ENCODE measurements at regions of chr9 and their contacts with region 1.

Region 1: GRCh38 chr9:1443450-1443849 is 393.3 kb downstream of the DMRT2 start:
- DNase-seq: no peak
- H3K4me3 ChIP-seq: no peak overlapping the region
- H3K4me3 Mint-ChIP-seq: no peak overlapping the region
- H3K27ac ChIP-seq: no peak overlapping the region
- H3K27ac Mint-ChIP-seq: no peak overlapping the region
- H3K4me1 ChIP-seq: no peaks in the 10 kb centered on the region
- H3K4me1 Mint-ChIP-seq: no peaks in the 10 kb centered on the region
- H3K27me3 ChIP-seq: no peaks in the 10 kb centered on the region
- H3K27me3 Mint-ChIP-seq: peaks cover 0 to 4% (median 3%) of the 10 kb centered on the region in 3 donors
- CTCF ChIP-seq: no peak

Region 2: DNA sequence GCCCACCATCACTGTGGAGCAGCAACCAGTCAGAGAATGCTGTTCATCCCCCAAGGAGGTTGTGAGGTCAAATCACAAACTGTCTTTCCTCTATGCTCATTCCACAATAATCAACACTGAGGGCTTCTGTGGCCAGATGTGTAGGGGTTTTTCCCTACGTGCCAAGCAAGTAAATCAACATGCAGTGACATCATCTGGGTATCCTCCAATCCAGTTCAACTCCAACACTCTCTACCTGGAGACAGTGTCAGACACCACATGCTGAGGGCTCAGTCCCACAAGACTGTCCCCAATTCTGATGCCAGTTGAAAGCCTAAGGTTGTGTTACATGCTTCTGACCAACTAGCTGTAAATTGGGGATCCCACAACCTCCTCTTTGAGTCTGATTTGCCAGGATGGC is 659.2 kb before region 1 on chr9:
- intact Hi-C with region 1: no loop called
- DNase-seq: no peak
- H3K4me3 ChIP-seq: no peak overlapping the region
- H3K4me3 Mint-ChIP-seq: no peak overlapping the region
- H3K27ac ChIP-seq: no peak overlapping the region
- H3K27ac Mint-ChIP-seq: peak overlapping the region in 1 of 7 donors; percentile 23
- H3K4me1 ChIP-seq: no peaks in the 10 kb centered on the region
- H3K4me1 Mint-ChIP-seq: peaks cover 2% of the 10 kb centered on the region
- H3K27me3 ChIP-seq: no peaks in the 10 kb centered on the region
- H3K27me3 Mint-ChIP-seq: peaks cover 0 to 7% (median 3%) of the 10 kb centered on the region in 3 donors
- CTCF ChIP-seq: no peak

Region 3: GRCh38 chr9:1453637-1454610 is 10.5 kb after region 1 on chr9:
- intact Hi-C with region 1: loop called in 1 of 2 experiments (anchors 1 kb)
- DNase-seq: no peak
- H3K4me3 ChIP-seq: no peak overlapping the region
- H3K4me3 Mint-ChIP-seq: no peak overlapping the region
- H3K27ac ChIP-seq: no peak overlapping the region
- H3K27ac Mint-ChIP-seq: no peak overlapping the region
- H3K4me1 ChIP-seq: no peaks in the 10 kb centered on the region
- H3K4me1 Mint-ChIP-seq: no peaks in the 10 kb centered on the region
- H3K27me3 ChIP-seq: no peaks in the 10 kb centered on the region
- H3K27me3 Mint-ChIP-seq: no peaks in the 10 kb centered on the region
- CTCF ChIP-seq: no peak

Region 4: DNA sequence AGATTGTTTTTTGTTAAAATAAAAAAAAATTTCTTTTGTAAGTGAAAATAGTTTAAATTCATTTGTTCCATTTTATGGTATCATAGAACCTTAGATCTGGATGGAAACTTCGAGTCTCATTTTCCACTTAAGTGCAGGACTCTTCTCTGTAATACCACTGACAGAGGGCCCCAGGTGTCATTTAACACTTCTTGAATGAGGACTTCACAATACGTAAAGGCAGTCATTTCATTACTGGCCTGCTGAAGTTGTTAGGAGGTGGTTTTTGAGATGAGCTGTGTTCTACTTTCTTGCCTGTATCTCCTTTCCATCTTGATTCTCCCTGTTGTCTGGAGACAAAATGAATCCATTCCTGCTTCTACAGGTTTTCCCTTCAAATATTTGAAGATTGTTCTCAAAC is 62.0 kb after region 1 on chr9:
- intact Hi-C with region 1: no loop called
- DNase-seq: no peak
- H3K4me3 ChIP-seq: no peak overlapping the region
- H3K4me3 Mint-ChIP-seq: no peak overlapping the region
- H3K27ac ChIP-seq: no peak overlapping the region
- H3K27ac Mint-ChIP-seq: no peak overlapping the region
- H3K4me1 ChIP-seq: no peaks in the 10 kb centered on the region
- H3K4me1 Mint-ChIP-seq: no peaks in the 10 kb centered on the region
- H3K27me3 ChIP-seq: no peaks in the 10 kb centered on the region
- H3K27me3 Mint-ChIP-seq: no peaks in the 10 kb centered on the region
- CTCF ChIP-seq: no peak

Measured in CD14-positive monocyte (primary cell).